ENCODE measurements at regions of chr13 and their contacts with region 1.

Region 1: GRCh38 chr13:49443704-49444523 is at the starts of genes CAB39L and SETDB2:
- DNase-seq: peak; percentile 99
- H3K4me3 Mint-ChIP-seq: peak within 1 kb of the TSS; percentile 95
- H3K27ac Mint-ChIP-seq: peak within 1 kb of the TSS; percentile 99
- H3K4me1 Mint-ChIP-seq: peaks cover 66% of the 10 kb centered on the region
- H3K27me3 Mint-ChIP-seq: peaks cover 5% of the 10 kb centered on the region
- total RNA-seq, gene CAB39L: 7.0 and 7.1 TPM in 2 replicates
- total RNA-seq, gene SETDB2: 13.0 and 14.6 TPM in 2 replicates

Region 2: GRCh38 chr13:48879432-48879831 is 564.5 kb before region 1 on chr13:
- intact Hi-C with region 1: loop called (anchors 5 kb)
- DNase-seq: no peak
- H3K4me3 Mint-ChIP-seq: peak overlapping the region; percentile 1
- H3K27ac Mint-ChIP-seq: peak overlapping the region; percentile 1
- H3K4me1 Mint-ChIP-seq: peaks cover 52% of the 10 kb centered on the region
- H3K27me3 Mint-ChIP-seq: peaks cover 6% of the 10 kb centered on the region

Region 3: GRCh38 chr13:49247643-49248621 is 196.0 kb before region 1 on chr13 and contains the start of gene CDADC1:
- intact Hi-C with region 1: loop called (anchors 1 kb)
- DNase-seq: peak; percentile 90
- H3K4me3 Mint-ChIP-seq: peak within 1 kb of the TSS; percentile 97
- H3K27ac Mint-ChIP-seq: peak within 1 kb of the TSS; percentile 97
- H3K4me1 Mint-ChIP-seq: peaks cover 40% of the 10 kb centered on the region
- H3K27me3 Mint-ChIP-seq: peaks cover 14% of the 10 kb centered on the region
- total RNA-seq, gene CDADC1: 8.1 and 9.5 TPM in 2 replicates

Region 4: DNA sequence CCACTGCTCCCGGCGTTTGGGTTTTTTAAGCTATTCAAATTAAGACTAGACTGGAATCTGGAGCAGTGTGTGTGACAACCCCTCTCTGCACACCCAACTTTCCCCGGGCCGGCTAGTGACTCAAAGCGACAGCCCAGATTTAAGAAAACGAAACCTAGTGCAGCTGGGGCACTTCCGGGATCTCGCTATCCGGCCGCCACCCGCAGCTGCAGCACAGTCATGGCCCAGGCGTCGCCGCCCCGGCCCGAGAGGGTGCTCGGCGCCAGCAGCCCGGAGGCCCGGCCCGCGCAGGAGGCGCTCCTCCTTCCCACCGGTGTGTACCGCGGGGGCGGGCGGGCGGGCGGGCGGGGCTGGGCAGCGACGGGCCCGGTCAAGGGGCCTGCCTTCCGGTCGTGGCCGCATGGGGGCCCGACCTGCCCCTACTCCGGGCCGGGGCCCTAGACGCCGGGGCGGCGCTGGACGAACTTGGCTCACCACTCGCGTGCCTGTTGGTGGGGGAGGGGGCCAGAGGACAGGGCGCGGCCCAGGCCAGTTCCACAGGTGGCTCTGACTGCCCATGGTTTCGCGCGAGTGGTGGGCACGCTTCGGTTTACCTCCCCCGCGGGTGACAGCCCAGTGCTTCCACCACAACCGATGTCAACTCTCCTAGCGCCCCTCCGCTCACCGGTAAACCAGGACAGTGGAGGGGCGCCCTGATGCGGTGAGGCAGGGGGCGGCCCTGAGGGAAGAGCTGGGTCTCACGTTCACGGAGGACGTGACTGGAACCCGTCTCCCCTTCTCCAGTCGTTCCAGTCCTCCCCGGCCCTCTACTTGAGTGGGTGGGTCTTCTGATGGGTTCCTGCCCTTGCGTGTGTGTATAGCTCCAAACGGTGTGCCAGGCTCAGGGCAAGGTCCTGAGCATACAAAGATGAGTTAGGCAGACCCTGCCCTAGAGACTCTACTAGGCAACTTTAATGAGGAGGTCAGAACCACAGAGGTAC is 52.2 kb after region 1 on chr13 and contains the start of gene PHF11:
- intact Hi-C with region 1: loop called (anchors 1 kb)
- DNase-seq: peak; percentile 85
- H3K4me3 Mint-ChIP-seq: peak within 1 kb of the TSS; percentile 96
- H3K27ac Mint-ChIP-seq: peak within 1 kb of the TSS; percentile 99
- H3K4me1 Mint-ChIP-seq: peaks cover 57% of the 10 kb centered on the region
- H3K27me3 Mint-ChIP-seq: no peaks in the 10 kb centered on the region
- total RNA-seq, gene PHF11: 66.0 and 68.0 TPM in 2 replicates

Region 5: DNA sequence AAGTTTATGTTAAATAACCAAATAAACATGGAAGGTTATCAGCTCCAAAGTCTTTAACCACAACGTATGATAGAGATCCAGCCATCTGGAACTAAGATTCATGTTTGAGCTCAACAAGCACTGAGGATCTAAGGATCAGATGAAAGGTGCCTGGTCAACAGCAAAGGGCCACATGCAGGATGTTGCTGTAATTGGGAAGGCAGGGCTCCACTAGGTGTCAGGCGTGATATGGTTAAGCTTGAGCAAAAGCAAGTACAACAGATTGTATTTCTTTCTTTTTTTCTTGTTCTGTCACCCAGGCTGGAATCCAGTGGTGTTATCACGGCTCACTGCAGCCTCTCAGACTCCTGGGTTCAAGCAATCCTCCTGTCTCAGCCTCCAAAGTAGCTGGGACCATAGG is 235.3 kb after region 1 on chr13:
- intact Hi-C with region 1: loop called (anchors 2 kb)
- DNase-seq: no peak
- H3K4me3 Mint-ChIP-seq: no peak overlapping the region
- H3K27ac Mint-ChIP-seq: no peak overlapping the region
- H3K4me1 Mint-ChIP-seq: peaks cover 20% of the 10 kb centered on the region
- H3K27me3 Mint-ChIP-seq: no peaks in the 10 kb centered on the region

Region 6: DNA sequence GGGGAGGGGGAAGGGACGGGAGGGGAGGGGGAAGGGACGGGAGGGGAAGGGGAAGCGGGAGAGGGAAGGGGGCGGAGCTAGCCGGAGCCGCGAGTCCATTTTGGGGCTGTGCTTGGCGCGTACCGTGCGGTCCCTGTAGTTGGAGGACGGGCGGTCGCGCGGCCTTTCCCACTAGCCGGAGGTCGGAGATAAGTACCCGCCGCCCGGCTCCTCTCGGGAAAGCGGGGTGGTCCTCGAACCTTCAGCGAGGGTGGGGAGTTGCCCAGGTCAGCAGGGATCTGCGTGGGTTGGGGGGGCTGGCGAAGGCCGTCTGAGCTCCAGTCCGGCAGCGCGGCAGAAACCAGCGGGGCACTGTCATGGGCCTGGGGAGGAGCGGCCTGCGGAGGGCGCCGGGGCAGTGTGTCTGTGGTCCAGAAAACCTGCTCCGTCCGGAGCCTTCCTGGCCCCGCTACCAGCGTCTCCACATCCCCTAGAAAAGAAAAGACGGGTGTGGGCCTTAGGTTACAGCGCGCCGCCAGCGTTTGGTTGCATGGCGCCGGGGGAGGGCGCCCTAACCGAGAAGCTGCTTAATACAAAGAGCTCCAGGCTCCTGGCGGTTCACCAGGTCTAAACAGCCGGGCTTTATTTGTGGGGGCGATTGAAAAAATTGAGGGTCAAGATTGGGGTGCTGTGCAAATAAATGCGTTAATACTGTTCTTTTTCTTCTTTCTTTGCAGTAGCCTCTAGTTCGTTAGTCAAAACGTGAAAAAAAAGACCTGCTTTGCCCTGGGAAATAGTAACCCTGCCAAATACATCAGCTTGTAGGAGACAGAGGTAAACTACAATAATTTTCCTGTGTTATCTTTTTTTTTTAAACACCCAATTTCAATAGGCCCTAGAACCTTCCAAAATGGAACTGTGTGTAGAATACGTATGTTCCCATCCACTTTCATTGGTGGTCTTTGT is 553.3 kb after region 1 on chr13 and contains the start of gene TRIM13:
- intact Hi-C with region 1: loop called (anchors 2 kb)
- DNase-seq: peak; percentile 76
- H3K4me3 Mint-ChIP-seq: peak within 1 kb of the TSS; percentile 87
- H3K27ac Mint-ChIP-seq: peak within 1 kb of the TSS; percentile 82
- H3K4me1 Mint-ChIP-seq: peaks cover 54% of the 10 kb centered on the region
- H3K27me3 Mint-ChIP-seq: no peaks in the 10 kb centered on the region
- total RNA-seq, gene TRIM13: 14.7 and 16.5 TPM in 2 replicates

Measured in activated T-helper 1 cell treated with anti-CD3 and anti-CD28 coated beads, Interleukin-12 subunit alpha, Interleukin-12 subunit beta, Interleukin-2, Interleukin-4 antibody, amounts not matched to agents 30 ng/mL and 10 ng/mL and 1 ng/mL, durations not matched to agents 14 hours and 24 hours and 36 hours (primary cell).